ENCODE measurements at regions of chr18 and their contacts with region 1.

Region 1: GRCh38 chr18:38635709-38636430 is 1070.3 kb upstream of the CELF4 start:
- DNase-seq: no peak
- H3K4me3 ChIP-seq: no peak overlapping the region
- H3K27ac ChIP-seq: no peak overlapping the region
- H3K4me1 ChIP-seq: no peaks in the 10 kb centered on the region
- H3K27me3 ChIP-seq: no peaks in the 10 kb centered on the region
- CTCF ChIP-seq: no peak

Region 2: GRCh38 chr18:38718365-38718901 is 82.6 kb after region 1 on chr18:
- CTCF ChIA-PET with region 1: no interaction called
- POLR2A ChIA-PET with region 1: no interaction called
- intact Hi-C with region 1: no loop called
- DNase-seq: peak in 1 of 2 experiments; percentile 0
- H3K4me3 ChIP-seq: no peak overlapping the region
- H3K27ac ChIP-seq: no peak overlapping the region
- H3K4me1 ChIP-seq: no peaks in the 10 kb centered on the region
- H3K27me3 ChIP-seq: no peaks in the 10 kb centered on the region
- CTCF ChIP-seq: no peak

Region 3: GRCh38 chr18:39448942-39449341 is 813.1 kb after region 1 on chr18:
- CTCF ChIA-PET with region 1: interaction called, 11 read pairs
- POLR2A ChIA-PET with region 1: no interaction called
- intact Hi-C with region 1: no loop called
- DNase-seq: no peak
- H3K4me3 ChIP-seq: no peak overlapping the region
- H3K27ac ChIP-seq: no peak overlapping the region
- H3K4me1 ChIP-seq: no peaks in the 10 kb centered on the region
- H3K27me3 ChIP-seq: no peaks in the 10 kb centered on the region
- CTCF ChIP-seq: no peak